ENCODE measurements at regions of chr1 and their contacts with region 1.

Region 1: DNA sequence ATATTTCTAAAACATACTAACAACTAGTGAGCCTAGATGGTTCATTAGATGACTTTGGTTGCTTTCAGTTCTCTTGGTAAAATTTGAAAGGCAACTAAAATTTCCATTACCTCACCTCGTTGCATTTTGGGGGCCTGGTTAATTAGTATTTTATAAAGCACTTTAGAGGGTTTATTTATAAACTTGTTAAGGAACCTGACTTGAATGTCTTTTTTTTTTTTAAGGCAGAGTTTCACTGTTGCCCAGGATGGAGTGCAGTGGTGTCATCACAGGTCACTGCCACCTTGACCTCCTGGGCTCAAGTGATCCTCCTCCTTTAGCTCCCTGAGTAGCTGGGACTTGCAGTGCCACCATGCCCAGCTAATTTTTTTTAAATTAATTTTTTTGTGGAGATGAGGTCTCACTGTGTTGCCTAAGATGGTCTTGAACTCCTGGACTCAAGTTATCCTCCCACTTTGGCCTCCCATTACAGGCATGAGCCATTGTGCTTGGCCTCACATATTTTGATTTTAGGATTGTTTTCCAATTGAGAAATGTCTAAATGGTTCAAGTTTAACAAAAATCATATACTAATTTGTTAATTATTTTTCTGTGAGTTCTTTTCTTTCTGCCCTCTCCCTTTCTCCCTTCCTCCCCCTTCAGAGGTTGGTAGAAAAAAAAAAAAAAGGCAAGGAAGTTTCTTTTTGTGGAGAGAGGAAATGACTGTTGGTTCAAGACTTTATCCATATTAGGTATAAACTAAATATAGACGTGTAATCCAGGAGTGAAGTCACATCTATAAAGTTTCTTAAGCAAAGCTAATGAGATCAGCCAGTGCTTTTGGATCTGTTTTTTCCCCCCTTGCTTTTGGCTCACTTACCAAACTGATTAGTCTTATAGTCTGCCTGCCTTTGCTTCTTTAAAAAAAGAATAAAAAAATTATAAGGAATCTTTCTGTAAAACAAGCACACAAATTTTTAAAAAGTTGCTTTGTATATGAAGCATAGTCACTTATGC is 24.7 kb downstream of the CLIC4 start:
- DNase-seq: no peak

Region 2: DNA sequence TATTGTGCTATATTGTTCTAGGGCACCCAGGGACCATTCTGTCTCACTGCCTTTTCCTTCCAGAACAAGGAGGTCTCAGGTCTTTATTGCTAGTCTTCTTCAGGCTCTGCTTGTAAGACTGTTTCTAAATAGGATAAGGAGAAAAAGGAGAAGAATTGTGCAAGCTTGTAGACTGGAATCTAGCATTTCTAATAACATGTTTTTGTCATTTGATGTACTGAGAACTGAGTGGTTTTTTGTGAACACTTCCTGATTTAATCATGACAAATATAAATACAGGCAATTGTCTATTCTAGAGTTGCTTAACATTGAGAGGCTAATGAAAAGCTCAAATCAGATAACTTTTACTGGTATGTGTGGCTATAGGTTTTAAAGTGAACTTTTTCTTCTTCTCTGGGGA is 52.9 kb after region 1 on chr1:
- intact Hi-C with region 1: loop called (anchors 10 kb)
- DNase-seq: no peak

Region 3: GRCh38 chr1:24888971-24889676 is 119.2 kb after region 1 on chr1:
- intact Hi-C with region 1: no loop called
- DNase-seq: no peak

Measured in cardiac septum (tissue), 1 donor.